ENCODE measurements at regions of chr13 and their contacts with region 1.

Region 1: DNA sequence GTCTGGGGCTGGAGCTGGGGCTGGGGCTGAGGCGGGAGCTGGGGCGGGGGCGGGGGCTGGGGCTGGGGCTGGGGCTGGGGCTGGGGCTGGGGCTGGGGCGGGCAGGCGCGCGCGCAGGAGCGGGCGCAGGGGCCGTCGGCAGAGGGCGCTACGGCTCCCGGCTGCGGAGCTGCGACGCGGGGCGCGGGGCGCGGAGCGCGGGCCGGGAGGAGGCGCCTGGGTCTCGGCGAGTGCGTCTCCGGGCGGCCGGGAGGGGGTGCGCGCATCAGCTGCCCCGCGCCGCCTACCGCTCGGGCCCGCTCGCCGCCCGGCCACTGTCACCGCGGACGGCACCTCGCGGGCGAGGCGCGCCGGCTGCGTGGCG is 422 bp upstream of the MTUS2 start:
- DNase-seq: no peak
- H3K4me3 ChIP-seq: no peak overlapping the region
- CTCF ChIP-seq: no peak
- POLR2A ChIP-seq: no peak

Region 2: DNA sequence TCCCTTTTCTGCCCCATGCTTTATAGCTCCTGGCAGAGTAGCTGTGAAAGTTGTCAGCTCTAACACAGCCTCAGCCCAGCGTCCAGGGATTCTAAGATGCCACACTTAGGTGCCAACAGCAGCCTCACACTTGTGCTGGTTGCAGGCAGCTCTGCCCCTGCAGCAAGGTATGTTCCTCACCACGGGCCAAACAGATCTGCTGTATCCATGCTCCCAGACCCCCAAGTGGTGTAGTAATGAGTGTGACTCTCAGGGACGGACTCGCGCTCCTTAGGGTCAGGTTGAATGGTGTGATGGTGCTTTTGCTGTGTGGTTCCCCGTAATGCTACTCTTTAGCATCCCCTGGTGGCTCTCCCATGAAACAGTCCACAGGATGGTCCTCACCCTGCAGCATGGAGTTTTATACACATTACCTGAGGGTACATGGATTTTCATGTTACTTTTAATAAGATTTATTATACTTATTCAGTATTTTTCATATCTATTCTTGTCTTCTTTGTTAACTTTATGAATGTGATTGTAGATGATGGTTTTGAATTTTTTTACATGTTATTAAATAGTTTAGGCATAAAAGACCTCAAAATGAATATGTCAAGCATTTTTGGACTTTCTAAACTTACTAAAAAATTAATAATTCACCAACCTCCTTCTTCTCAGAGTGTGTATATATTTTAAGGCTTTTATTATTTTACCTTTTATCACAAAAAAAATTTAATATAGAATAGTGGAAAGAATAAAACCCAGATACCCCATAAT is 543.3 kb after region 1 on chr13:
- intact Hi-C with region 1: loop called (anchors 10 kb)
- DNase-seq: no peak
- H3K4me3 ChIP-seq: no peak overlapping the region
- CTCF ChIP-seq: peak in 1 of 3 donors; percentile 43
- POLR2A ChIP-seq: no peak

Measured in lower leg skin (tissue), 4 donors.